ENCODE measurements at regions of chr1 and their contacts with region 1.

Region 1: DNA sequence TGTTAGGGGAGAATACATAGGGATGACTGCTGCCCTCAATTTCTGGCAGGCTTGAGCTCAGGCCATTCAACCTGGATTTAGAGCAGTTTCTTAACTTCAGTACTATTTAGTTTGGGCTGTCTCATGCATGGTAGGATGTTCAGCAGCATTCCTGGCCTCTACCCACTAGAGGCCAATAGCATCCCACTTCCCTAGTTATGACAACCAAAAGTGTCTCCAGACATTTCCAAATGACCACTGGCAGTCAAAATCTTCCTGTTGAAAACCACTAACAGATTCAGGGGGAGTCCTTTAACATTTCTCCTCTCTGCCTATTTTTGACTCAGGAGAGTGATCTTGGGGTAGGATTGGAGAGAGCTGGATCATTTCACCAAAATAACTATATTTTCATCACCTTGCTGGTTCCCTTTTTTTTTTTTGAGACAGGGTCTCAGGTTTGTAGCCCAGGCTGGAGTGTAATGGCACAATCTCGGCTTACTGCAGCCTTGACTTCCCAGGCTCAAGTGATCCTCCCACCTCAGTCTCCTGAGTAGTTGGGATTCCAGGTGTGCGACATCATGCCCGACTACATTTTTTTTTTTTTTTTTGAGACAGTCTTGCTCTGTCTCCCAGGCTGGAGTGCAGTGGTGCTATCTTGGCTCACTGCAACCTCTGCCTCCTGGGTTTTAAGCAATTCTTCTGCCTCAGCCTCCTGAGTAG is 8.7 kb downstream of the GNAT2 start:
- DNase-seq: no peak
- H3K4me3 ChIP-seq: no peak overlapping the region
- H3K27ac ChIP-seq: no peak overlapping the region
- H3K4me1 ChIP-seq: no peaks in the 10 kb centered on the region
- H3K27me3 ChIP-seq: no peaks in the 10 kb centered on the region
- CTCF ChIP-seq: no peak
- EP300 ChIP-seq: no peak
- POLR2A ChIP-seq: no peak
- RAD21 ChIP-seq: no peak

Region 2: GRCh38 chr1:109620841-109621286 is 10.1 kb after region 1 on chr1:
- CTCF ChIA-PET with region 1: interaction called, 7 read pairs
- POLR2A ChIA-PET with region 1: interaction called, 13 read pairs
- DNase-seq: peak in 1 of 2 experiments; percentile 89
- H3K4me3 ChIP-seq: peak overlapping the region; percentile 69 to 85 (median 78)
- H3K27ac ChIP-seq: no peak overlapping the region
- H3K4me1 ChIP-seq: peaks cover 4 to 25% (median 12%) of the 10 kb centered on the region in 4 experiments
- H3K27me3 ChIP-seq: no peaks in the 10 kb centered on the region
- CTCF ChIP-seq: no peak
- EP300 ChIP-seq: no peak
- POLR2A ChIP-seq: no peak
- RAD21 ChIP-seq: no peak

Region 3: DNA sequence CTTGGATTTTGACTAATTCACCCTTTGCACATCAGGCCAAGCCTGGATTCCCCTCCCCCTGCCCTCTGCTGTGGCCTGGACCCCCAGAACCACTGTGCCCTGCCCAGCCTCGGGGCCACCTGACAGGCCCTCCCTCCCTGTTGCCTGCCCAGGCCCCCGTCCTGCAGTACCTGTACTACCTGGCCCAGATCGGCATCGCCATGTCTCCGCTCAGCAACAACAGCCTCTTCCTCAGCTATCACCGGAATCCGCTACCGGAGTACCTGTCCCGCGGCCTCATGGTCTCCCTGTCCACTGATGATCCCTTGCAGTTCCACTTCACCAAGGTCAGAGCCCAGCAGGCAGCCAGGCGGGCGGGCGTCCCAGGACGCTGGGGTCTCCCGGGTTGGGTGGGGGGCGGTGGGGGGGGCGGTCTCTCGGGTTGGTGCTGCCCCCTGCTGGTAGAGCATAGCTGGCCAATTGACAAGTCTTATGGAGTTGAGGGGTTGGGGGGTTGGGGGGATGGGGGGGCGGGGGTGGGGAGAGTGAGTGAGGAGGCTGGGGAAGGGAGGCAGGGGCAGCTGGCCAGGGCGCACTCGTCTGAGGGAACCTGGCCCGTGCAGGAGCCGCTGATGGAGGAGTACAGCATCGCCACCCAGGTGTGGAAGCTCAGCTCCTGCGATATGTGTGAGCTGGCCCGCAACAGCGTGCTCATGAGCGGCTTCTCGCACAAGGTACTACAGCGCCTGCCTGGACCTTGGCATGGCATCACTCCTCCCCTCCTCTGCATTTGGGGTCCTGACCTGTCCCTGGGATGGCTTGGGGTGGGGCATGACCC is 19.5 kb after region 1 on chr1:
- CTCF ChIA-PET with region 1: interaction called, 22 read pairs
- POLR2A ChIA-PET with region 1: interaction called, 13 read pairs
- DNase-seq: peak in 1 of 2 experiments; percentile 69
- H3K4me3 ChIP-seq: no peak overlapping the region
- H3K27ac ChIP-seq: no peak overlapping the region
- H3K4me1 ChIP-seq: peaks cover 0 to 2% (median 0%) of the 10 kb centered on the region in 4 experiments; a peak in 2 of 7 replicates
- H3K27me3 ChIP-seq: no peaks in the 10 kb centered on the region
- CTCF ChIP-seq: no peak
- EP300 ChIP-seq: no peak
- POLR2A ChIP-seq: no peak
- RAD21 ChIP-seq: no peak; a peak in 1 of 4 replicates

Region 4: GRCh38 chr1:109655601-109656519 is 45.1 kb after region 1 on chr1 and contains the start of gene GSTM4:
- CTCF ChIA-PET with region 1: no interaction called
- POLR2A ChIA-PET with region 1: no interaction called
- DNase-seq: peak; percentile 44 to 86
- H3K4me3 ChIP-seq: peak within 1 kb of the TSS; percentile 59 to 74 (median 66)
- H3K27ac ChIP-seq: no peak within 1 kb of the TSS
- H3K4me1 ChIP-seq: 0 out of 7 replicates have a peak, but pooled peaks cover 0 to 3% (median 0%) of the 10 kb centered on the region in 4 experiments
- H3K27me3 ChIP-seq: peaks cover 0 to 5% (median 4%) of the 10 kb centered on the region in 4 experiments; a peak in 6 of 7 replicates
- CTCF ChIP-seq: no peak; a peak in 1 of 4 replicates
- EP300 ChIP-seq: 0 out of 3 replicates have a peak, but pooled peaks of 1 of the 2 experiments have one; percentile 22
- POLR2A ChIP-seq: peak in 1 of 2 experiments; percentile 32; a peak in 1 of 3 replicates
- RAD21 ChIP-seq: no peak; a peak in 1 of 4 replicates
- total RNA-seq, gene GSTM4: 11.3 and 18.7 TPM in 2 replicates